CD8-positive, alpha-beta T cell (primary cell): ENCODE measurements at regions of chr11 and their contacts with region 1.

Region 1: GRCh38 chr11:31487848-31488247 is 21.6 kb downstream of the IMMP1L start:
- DNase-seq: peak in 2 of 9 experiments; percentile 35 to 51
- ATAC-seq: no peak
- H3K4me3 ChIP-seq: no peak overlapping the region
- H3K4me3 Mint-ChIP-seq: no peak overlapping the region
- H3K27ac ChIP-seq: no peak overlapping the region
- H3K27ac Mint-ChIP-seq: no peak overlapping the region
- H3K4me1 ChIP-seq: no peaks in the 10 kb centered on the region
- H3K4me1 Mint-ChIP-seq: peaks cover 27% of the 10 kb centered on the region
- H3K27me3 ChIP-seq: no peaks in the 10 kb centered on the region
- H3K27me3 Mint-ChIP-seq: no peaks in the 10 kb centered on the region
- CTCF ChIP-seq: peak; percentile 43

Region 2: DNA sequence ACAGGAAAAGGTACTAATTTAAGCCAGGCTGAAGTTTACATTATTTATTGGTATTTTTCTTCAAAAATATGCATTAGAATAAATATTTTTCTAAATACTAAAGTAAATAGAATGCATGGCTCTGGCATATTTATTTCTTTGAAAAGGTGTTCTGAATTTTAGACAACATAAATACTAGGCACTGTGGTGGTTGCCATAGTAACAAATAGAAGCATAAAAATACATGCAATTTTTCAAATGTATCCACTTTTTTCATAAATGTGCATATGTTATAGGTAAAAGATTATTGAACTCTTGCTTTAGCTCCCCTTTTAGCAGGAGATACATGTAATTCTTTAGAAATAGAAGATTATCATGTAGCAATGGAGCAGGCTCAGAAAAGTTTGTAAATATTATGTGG is 136.7 kb before region 1 on chr11:
- CTCF ChIA-PET with region 1: no interaction called
- POLR2A ChIA-PET with region 1: no interaction called
- intact Hi-C with region 1: no loop called
- DNase-seq: no peak
- ATAC-seq: no peak
- H3K4me3 ChIP-seq: no peak overlapping the region
- H3K4me3 Mint-ChIP-seq: no peak overlapping the region
- H3K27ac ChIP-seq: no peak overlapping the region
- H3K27ac Mint-ChIP-seq: no peak overlapping the region
- H3K4me1 ChIP-seq: no peaks in the 10 kb centered on the region
- H3K4me1 Mint-ChIP-seq: no peaks in the 10 kb centered on the region
- H3K27me3 ChIP-seq: no peaks in the 10 kb centered on the region
- H3K27me3 Mint-ChIP-seq: peaks cover 18% of the 10 kb centered on the region
- CTCF ChIP-seq: no peak

Region 3: GRCh38 chr11:31499576-31500178 is 11.8 kb after region 1 on chr11:
- CTCF ChIA-PET with region 1: no interaction called
- POLR2A ChIA-PET with region 1: no interaction called
- intact Hi-C with region 1: loop called in 1 of 2 experiments (anchors 2 kb)
- DNase-seq: no peak
- ATAC-seq: no peak
- H3K4me3 ChIP-seq: no peak overlapping the region
- H3K4me3 Mint-ChIP-seq: no peak overlapping the region
- H3K27ac ChIP-seq: no peak overlapping the region
- H3K27ac Mint-ChIP-seq: no peak overlapping the region
- H3K4me1 ChIP-seq: no peaks in the 10 kb centered on the region
- H3K4me1 Mint-ChIP-seq: peaks cover 40% of the 10 kb centered on the region
- H3K27me3 ChIP-seq: no peaks in the 10 kb centered on the region
- H3K27me3 Mint-ChIP-seq: no peaks in the 10 kb centered on the region
- CTCF ChIP-seq: no peak